IMR-90 (cell line): ENCODE measurements at regions of chr1 and their contacts with region 1.

Region 1: GRCh38 chr1:51897699-51898031 is 19.1 kb upstream of the NRDC start:
- DNase-seq: peak; percentile 97
- ATAC-seq: no peak
- H3K4me3 ChIP-seq: no peak overlapping the region
- H3K27ac ChIP-seq: peak overlapping the region; percentile 96
- H3K4me1 ChIP-seq: peaks cover 14% of the 10 kb centered on the region
- H3K27me3 ChIP-seq: no peaks in the 10 kb centered on the region
- CTCF ChIP-seq: no peak
- POLR2A ChIP-seq: no peak
- RAD21 ChIP-seq: no peak

Region 2: GRCh38 chr1:51926171-51926812 is 28.6 kb after region 1 on chr1:
- CTCF ChIA-PET with region 1: interaction called, 21 read pairs
- POLR2A ChIA-PET with region 1: no interaction called
- dilution Hi-C with region 1: no loop called
- in situ Hi-C with region 1: no loop called
- intact Hi-C with region 1: loop called (anchors 1 kb)
- DNase-seq: peak; percentile 59
- ATAC-seq: peak; percentile 40
- H3K4me3 ChIP-seq: no peak overlapping the region
- H3K27ac ChIP-seq: peak overlapping the region; percentile 10; the same call in 1 of the 2 replicates
- H3K4me1 ChIP-seq: peaks cover 35% of the 10 kb centered on the region
- H3K27me3 ChIP-seq: no peaks in the 10 kb centered on the region
- CTCF ChIP-seq: peak; percentile 50
- POLR2A ChIP-seq: no peak
- RAD21 ChIP-seq: peak; percentile 60

Region 3: GRCh38 chr1:52056163-52056936 is 158.7 kb after region 1 on chr1 and contains the start of gene BTF3L4:
- CTCF ChIA-PET with region 1: no interaction called
- POLR2A ChIA-PET with region 1: interaction called, 5 read pairs
- dilution Hi-C with region 1: no loop called
- in situ Hi-C with region 1: no loop called
- intact Hi-C with region 1: loop called (anchors 2 kb)
- DNase-seq: peak; percentile 89
- ATAC-seq: peak; percentile 90
- H3K4me3 ChIP-seq: peak within 1 kb of the TSS; percentile 84
- H3K27ac ChIP-seq: peak within 1 kb of the TSS; percentile 94
- H3K4me1 ChIP-seq: peaks cover 4% of the 10 kb centered on the region; the same call in 1 of the 2 replicates
- H3K27me3 ChIP-seq: no peaks in the 10 kb centered on the region
- CTCF ChIP-seq: no peak
- POLR2A ChIP-seq: peak; percentile 37; the same call in 1 of the 2 replicates
- RAD21 ChIP-seq: no peak
- total RNA-seq, gene BTF3L4: 41.2 and 46.4 TPM in 2 replicates

Region 4: GRCh38 chr1:52281518-52281917 is 383.9 kb after region 1 on chr1:
- CTCF ChIA-PET with region 1: no interaction called
- POLR2A ChIA-PET with region 1: no interaction called
- dilution Hi-C with region 1: no loop called
- in situ Hi-C with region 1: loop called (anchors 25 kb)
- intact Hi-C with region 1: loop called (anchors 5 kb)
- DNase-seq: peak; percentile 82
- ATAC-seq: peak; percentile 99
- H3K4me3 ChIP-seq: no peak overlapping the region
- H3K27ac ChIP-seq: no peak overlapping the region
- H3K4me1 ChIP-seq: no peaks in the 10 kb centered on the region
- H3K27me3 ChIP-seq: no peaks in the 10 kb centered on the region
- CTCF ChIP-seq: no peak
- POLR2A ChIP-seq: no peak
- RAD21 ChIP-seq: no peak